ENCODE measurements at regions of chr9 and their contacts with region 1.

Region 1: GRCh38 chr9:127838375-127839078 is 15.9 kb downstream of the ENG start:
- DNase-seq: peak; percentile 82 to 94 (median 92)
- H3K4me3 ChIP-seq: no peak overlapping the region
- H3K4me3 Mint-ChIP-seq: no peak overlapping the region
- H3K27ac ChIP-seq: peak overlapping the region in 1 of 2 donors; percentile 55
- H3K27ac Mint-ChIP-seq: peak overlapping the region in 6 of 7 donors; percentile 57 to 99 (median 78)
- H3K4me1 ChIP-seq: peaks cover 38 to 39% of the 10 kb centered on the region in 2 donors
- H3K4me1 Mint-ChIP-seq: peaks cover 44% of the 10 kb centered on the region
- H3K27me3 ChIP-seq: no peaks in the 10 kb centered on the region
- H3K27me3 Mint-ChIP-seq: peaks cover 2 to 6% (median 5%) of the 10 kb centered on the region in 3 donors
- CTCF ChIP-seq: no peak

Region 2: DNA sequence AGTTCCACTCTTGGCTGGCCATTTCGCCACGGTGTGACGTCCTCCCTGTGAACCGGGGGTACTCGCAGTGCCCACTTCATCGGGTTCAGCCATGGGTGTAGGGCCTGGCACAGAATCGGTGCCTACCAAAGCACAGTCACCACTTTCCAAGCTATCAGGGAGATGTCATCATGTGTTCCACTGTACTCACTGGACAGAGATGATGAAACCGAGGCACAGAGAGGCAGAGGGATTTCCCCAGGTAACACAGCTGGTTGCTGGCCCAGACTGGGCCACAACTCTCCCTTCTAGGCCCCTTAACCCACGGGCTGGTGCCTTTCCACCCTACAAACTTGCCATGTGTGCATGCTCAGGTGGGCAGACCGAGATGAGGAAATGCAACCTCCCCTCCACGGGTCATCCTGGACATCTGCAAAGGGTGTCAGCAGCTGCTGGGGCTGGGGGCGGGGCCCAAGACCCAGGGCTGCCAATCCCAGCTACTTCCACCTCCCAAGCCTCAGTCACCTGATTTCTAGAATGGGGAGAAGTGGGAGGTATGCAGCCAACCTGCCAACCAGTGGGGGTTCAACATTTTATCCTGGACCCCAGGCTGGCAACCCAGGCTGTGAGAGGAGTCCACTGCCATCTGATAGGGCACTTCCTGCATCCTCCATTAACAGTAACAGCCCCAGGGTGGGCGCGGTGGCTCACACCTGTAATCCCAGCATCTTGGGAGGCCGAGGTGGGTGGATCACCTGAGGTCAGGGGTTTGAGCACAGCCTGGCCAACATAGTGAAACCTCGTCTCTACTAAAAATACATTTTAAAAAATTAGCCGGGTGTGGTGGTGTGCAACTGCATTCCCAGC is 59.2 kb before region 1 on chr9:
- intact Hi-C with region 1: loop called in 1 of 2 experiments (anchors 2 kb)
- DNase-seq: peak; percentile 89 to 95 (median 94)
- H3K4me3 ChIP-seq: peak overlapping the region; percentile 74 to 98 (median 91)
- H3K4me3 Mint-ChIP-seq: peak overlapping the region; percentile 99 to 100
- H3K27ac ChIP-seq: peak overlapping the region; percentile 96 to 98
- H3K27ac Mint-ChIP-seq: peak overlapping the region; percentile 93 to 99 (median 98)
- H3K4me1 ChIP-seq: peaks cover 84 to 87% of the 10 kb centered on the region in 2 donors
- H3K4me1 Mint-ChIP-seq: peaks cover 75% of the 10 kb centered on the region
- H3K27me3 ChIP-seq: no peaks in the 10 kb centered on the region
- H3K27me3 Mint-ChIP-seq: peaks cover 0 to 9% (median 0%) of the 10 kb centered on the region in 3 donors
- CTCF ChIP-seq: no peak

Region 3: GRCh38 chr9:127802576-127803443 is 35.7 kb before region 1 on chr9 and contains the start of gene FPGS:
- intact Hi-C with region 1: loop called in 1 of 2 experiments (anchors 5 kb)
- DNase-seq: peak; percentile 71 to 92 (median 87)
- H3K4me3 ChIP-seq: peak within 1 kb of the TSS; percentile 67 to 92 (median 72)
- H3K4me3 Mint-ChIP-seq: peak within 1 kb of the TSS; percentile 94
- H3K27ac ChIP-seq: peak within 1 kb of the TSS; percentile 92 to 94
- H3K27ac Mint-ChIP-seq: peak within 1 kb of the TSS; percentile 89 to 97 (median 94)
- H3K4me1 ChIP-seq: peaks cover 33 to 37% of the 10 kb centered on the region in 2 donors
- H3K4me1 Mint-ChIP-seq: peaks cover 33% of the 10 kb centered on the region
- H3K27me3 ChIP-seq: no peaks in the 10 kb centered on the region
- H3K27me3 Mint-ChIP-seq: peaks cover 0 to 5% (median 2%) of the 10 kb centered on the region in 3 donors
- CTCF ChIP-seq: no peak
- polyA plus RNA-seq, gene FPGS: 21.3 to 28.5 (median 25.2) TPM

Region 4: DNA sequence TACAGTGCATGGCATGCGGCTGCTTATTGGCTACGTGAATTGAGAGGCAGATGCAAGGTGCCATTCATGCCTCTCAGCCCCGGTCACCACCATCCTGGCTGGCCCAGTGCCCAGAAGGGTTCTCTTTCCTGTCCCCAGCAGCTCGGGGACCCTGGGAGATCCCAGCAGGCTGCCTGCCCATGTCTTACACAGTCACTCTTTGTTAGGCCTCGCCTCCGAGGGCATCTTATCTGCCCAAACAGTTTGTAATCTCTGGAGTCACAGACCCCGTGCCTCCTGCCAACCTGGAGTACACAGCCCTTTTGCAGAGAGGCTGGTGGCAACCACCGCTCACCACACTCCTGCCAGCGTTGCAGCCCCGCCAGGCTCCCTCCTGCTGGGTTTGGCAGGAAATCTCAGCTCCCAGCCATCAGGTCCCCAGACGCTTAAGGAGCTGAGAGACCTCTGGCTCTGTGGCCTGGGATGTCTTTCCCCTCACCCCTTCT is 45.9 kb after region 1 on chr9:
- intact Hi-C with region 1: no loop called
- DNase-seq: no peak
- H3K4me3 ChIP-seq: no peak overlapping the region
- H3K4me3 Mint-ChIP-seq: no peak overlapping the region
- H3K27ac ChIP-seq: no peak overlapping the region
- H3K27ac Mint-ChIP-seq: peak overlapping the region in 1 of 7 donors; percentile 60
- H3K4me1 ChIP-seq: no peaks in the 10 kb centered on the region
- H3K4me1 Mint-ChIP-seq: peaks cover 8% of the 10 kb centered on the region
- H3K27me3 ChIP-seq: no peaks in the 10 kb centered on the region
- H3K27me3 Mint-ChIP-seq: peaks cover 2 to 5% (median 3%) of the 10 kb centered on the region in 3 donors
- CTCF ChIP-seq: no peak

Region 5: DNA sequence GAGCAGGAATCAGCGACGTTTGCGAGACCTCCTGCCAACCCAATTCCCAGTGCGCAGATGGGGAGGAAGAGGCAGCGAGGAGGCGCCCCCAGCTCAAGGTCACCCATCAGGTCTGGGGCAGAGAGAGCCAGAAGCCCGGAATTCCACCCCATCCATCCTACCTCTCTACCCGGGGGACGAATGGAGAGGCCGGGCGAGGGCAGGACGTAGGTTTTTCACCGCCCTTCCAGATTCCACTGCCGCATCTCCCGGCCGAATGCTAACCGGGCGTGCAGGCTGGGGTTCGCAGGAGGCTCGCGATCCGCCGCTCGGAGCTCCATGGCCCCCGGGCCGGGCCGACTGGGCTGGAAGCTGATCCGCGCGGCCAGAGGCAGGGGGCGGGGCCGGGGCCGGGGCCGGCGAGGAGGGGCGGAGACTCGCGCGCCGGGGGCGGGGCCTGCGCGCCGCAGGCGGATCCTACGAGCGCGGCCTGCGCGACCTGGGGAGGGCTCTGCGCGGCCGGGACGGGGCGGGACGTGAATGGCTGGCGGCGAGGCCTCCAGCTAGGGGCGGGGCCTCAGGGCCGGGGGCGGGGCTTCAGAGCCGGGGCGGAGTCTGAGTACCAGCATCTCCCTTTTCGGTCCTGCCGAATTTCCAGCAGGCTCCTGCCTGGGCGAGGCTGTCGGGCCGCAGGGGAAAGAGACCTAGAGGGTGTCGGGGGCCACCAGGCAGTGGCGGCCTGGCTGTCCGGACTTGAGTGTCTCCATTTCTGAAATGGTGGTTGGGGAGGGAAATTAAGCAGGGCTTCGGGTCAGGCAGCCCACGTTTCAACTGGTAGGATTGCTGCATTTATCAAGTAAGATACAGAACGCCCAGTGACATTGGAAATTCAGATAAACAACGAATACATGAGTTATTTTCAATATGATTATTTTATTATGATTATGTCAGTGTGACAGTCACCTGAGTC is 78.4 kb after region 1 on chr9 and contains the start of gene ST6GALNAC4:
- intact Hi-C with region 1: no loop called
- DNase-seq: peak; percentile 90 to 94 (median 91)
- H3K4me3 ChIP-seq: peak within 1 kb of the TSS; percentile 54 to 92 (median 55)
- H3K4me3 Mint-ChIP-seq: peak within 1 kb of the TSS; percentile 81 to 86
- H3K27ac ChIP-seq: peak within 1 kb of the TSS; percentile 85 to 93
- H3K27ac Mint-ChIP-seq: peak within 1 kb of the TSS; percentile 81 to 100 (median 97)
- H3K4me1 ChIP-seq: peaks cover 56 to 66% of the 10 kb centered on the region in 2 donors
- H3K4me1 Mint-ChIP-seq: peaks cover 64% of the 10 kb centered on the region
- H3K27me3 ChIP-seq: peaks cover 0 to 3% of the 10 kb centered on the region in 2 donors
- H3K27me3 Mint-ChIP-seq: peaks cover 3 to 13% (median 7%) of the 10 kb centered on the region in 3 donors
- CTCF ChIP-seq: no peak
- polyA plus RNA-seq, gene ST6GALNAC4: 8.9 to 14.0 (median 10.3) TPM

Measured in CD14-positive monocyte (primary cell).